ENCODE measurements at regions of chr13 and their contacts with region 1.

Region 1: DNA sequence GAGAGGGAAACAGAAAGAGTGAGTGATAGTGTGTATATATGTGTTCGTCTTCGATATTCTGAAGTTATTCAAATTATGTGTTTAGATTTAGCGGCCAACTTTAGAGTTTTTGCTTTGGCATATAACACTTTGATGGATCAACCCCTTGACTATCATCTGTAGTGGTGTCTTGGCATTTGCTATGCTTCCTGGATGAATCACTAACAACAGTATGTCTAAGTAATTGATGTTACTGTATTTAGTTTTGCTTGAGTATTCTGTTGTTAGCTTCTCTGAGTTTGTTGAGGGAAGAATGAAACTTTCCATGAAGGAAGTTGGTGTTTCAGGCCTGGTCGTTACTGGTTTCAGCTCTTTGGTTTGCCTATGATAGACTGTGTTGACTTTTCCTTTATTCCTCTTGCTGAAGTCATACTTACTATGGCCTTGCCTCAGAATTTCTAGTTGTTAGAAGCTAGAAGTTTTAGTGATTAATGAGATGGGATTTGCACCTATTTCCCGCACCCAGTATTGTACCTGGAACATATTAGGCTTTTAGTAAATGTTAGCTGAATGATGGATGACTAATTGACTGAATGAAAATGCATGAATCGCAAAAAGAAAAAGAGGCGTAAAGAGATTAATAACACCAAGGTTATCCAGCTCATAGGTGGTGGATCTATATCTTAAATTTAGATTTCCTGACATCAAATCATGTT is 20.7 kb downstream of the NDFIP2 start:
- DNase-seq: no peak
- CTCF ChIP-seq: no peak

Region 2: DNA sequence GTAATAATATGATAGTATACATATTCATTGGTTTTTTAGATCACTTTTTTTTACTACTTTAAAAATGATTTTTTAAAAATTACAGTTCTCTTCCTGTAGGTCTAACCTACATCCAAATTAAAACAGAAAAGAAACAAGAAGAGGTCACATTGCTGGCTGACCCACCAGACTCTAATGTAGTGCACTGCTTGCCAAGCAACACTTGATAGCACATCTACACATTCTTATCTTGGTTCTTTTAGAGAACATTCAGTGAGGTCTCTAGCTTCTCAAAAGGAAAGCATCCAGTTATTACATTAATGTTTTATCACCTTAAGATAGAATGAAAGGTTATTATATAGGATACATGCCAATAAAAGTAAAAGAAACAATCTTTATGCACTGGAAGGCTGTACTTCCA is 14.9 kb after region 1 on chr13:
- CTCF ChIA-PET with region 1: interaction called, 26 read pairs
- POLR2A ChIA-PET with region 1: no interaction called
- DNase-seq: no peak
- CTCF ChIP-seq: no peak